ENCODE measurements at regions of chr11 and their contacts with region 1.

Region 1: DNA sequence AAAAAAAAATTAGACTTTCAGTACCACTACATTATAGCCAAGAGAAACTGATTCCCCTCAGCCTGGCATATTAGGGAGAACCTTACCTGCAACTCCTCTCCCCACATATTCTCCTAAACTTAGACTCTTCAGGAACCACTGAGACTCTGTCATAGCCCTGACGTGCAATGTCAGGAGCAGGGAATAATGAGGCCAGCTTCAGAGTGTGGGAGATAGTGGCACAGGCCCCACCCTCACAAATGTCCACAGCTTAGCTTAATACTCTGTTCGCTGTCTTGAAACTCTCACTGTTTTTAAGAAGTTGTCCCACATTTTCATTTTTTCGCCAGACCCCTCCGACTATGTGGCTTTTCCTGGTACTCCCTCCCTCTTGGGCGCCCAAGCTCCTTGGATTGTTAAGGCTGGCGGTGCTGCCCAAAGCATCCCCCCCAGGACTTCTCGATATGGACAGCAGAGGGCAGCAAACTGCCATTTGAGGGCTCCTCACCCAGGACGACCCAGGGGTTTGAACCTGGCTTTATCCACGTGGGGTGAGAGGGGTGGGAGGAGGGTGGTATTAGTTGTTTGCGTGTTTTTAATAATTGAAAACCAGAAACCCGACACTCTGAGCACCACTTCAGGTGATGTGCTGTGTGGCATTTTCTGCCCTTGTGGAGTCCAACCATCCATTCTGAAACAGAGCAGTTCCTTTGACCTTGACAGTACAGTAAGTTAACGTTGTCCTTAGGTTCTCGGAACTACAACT is 45.2 kb upstream of the RASSF10 start:
- DNase-seq: peak; percentile 53 to 76 (median 62)
- H3K4me3 ChIP-seq: no peak overlapping the region
- H3K27ac ChIP-seq: no peak overlapping the region
- H3K27me3 ChIP-seq: peaks cover 0 to 15% (median 0%) of the 10 kb centered on the region in 45 donors
- CTCF ChIP-seq: peak; percentile 64 to 97 (median 89)

Region 2: GRCh38 chr11:12331239-12331874 is 632.6 kb before region 1 on chr11:
- intact Hi-C with region 1: loop called in 1 of 2 experiments (anchors 5 kb)
- DNase-seq: peak; percentile 69 to 92 (median 84)
- H3K4me3 ChIP-seq: peak overlapping the region in 20 of 59 donors; percentile 0 to 48 (median 23)
- H3K27ac ChIP-seq: peak overlapping the region in 16 of 59 donors; percentile 11 to 73 (median 60)
- H3K27me3 ChIP-seq: peaks cover 0 to 11% (median 0%) of the 10 kb centered on the region in 45 donors
- CTCF ChIP-seq: peak; percentile 77 to 97 (median 88)

Region 3: GRCh38 chr11:12914400-12914912 is 49.5 kb before region 1 on chr11:
- intact Hi-C with region 1: loop called in 1 of 2 experiments (anchors 2 kb)
- DNase-seq: peak; percentile 84 to 92 (median 89)
- H3K4me3 ChIP-seq: peak overlapping the region in 8 of 59 donors; percentile 2 to 37 (median 17)
- H3K27ac ChIP-seq: peak overlapping the region in 52 of 59 donors; percentile 3 to 83 (median 66)
- H3K27me3 ChIP-seq: no peaks in the 10 kb centered on the region
- CTCF ChIP-seq: peak; percentile 40 to 94 (median 80)

Region 4: GRCh38 chr11:13152736-13153533 is 189.0 kb after region 1 on chr11:
- intact Hi-C with region 1: loop called (anchors 1 to 2 kb)
- DNase-seq: no peak
- H3K4me3 ChIP-seq: no peak overlapping the region
- H3K27ac ChIP-seq: no peak overlapping the region
- H3K27me3 ChIP-seq: no peaks in the 10 kb centered on the region
- CTCF ChIP-seq: peak in 55 of 56 donors; percentile 23 to 86 (median 61)

Region 5: GRCh38 chr11:13183094-13183825 is 219.3 kb after region 1 on chr11:
- intact Hi-C with region 1: loop called in 1 of 2 experiments (anchors 10 kb)
- DNase-seq: peak in 1 of 10 donors; percentile 42
- H3K4me3 ChIP-seq: peak overlapping the region in 58 of 59 donors; percentile 1 to 66 (median 42)
- H3K27ac ChIP-seq: no peak overlapping the region
- H3K27me3 ChIP-seq: no peaks in the 10 kb centered on the region
- CTCF ChIP-seq: peak; percentile 23 to 70 (median 57)

Region 6: GRCh38 chr11:13343931-13344717 is 380.2 kb after region 1 on chr11:
- intact Hi-C with region 1: loop called in 1 of 2 experiments (anchors 10 kb)
- DNase-seq: peak in 6 of 10 donors; percentile 54 to 73 (median 59)
- H3K4me3 ChIP-seq: no peak overlapping the region
- H3K27ac ChIP-seq: no peak overlapping the region
- H3K27me3 ChIP-seq: no peaks in the 10 kb centered on the region
- CTCF ChIP-seq: peak; percentile 67 to 91 (median 82)

Measured in dorsolateral prefrontal cortex (tissue), 120 donors.